ENCODE measurements at regions of chr6 and their contacts with region 1.

Region 1: GRCh38 chr6:165231581-165232561 is 77.5 kb downstream of the C6orf118 start:
- DNase-seq: peak; percentile 22 to 51
- ATAC-seq: peak; percentile 92 to 96
- H3K4me3 ChIP-seq: peak overlapping the region; percentile 2 to 37 (median 18)
- H3K27ac ChIP-seq: peak overlapping the region; percentile 79 to 86 (median 84)
- H3K4me1 ChIP-seq: peaks cover 13 to 18% of the 10 kb centered on the region in 2 donors
- H3K27me3 ChIP-seq: no peaks in the 10 kb centered on the region
- CTCF ChIP-seq: peak; percentile 57 to 76 (median 74)
- POLR2A ChIP-seq: no peak

Region 2: GRCh38 chr6:163637524-163637923 is 1594.3 kb before region 1 on chr6:
- in situ Hi-C with region 1: loop called in 1 of 4 experiments (anchors 25 kb)
- intact Hi-C with region 1: no loop called
- DNase-seq: no peak
- ATAC-seq: no peak
- H3K4me3 ChIP-seq: no peak overlapping the region
- H3K27ac ChIP-seq: no peak overlapping the region
- H3K4me1 ChIP-seq: no peaks in the 10 kb centered on the region
- H3K27me3 ChIP-seq: no peaks in the 10 kb centered on the region
- CTCF ChIP-seq: no peak
- POLR2A ChIP-seq: no peak

Region 3: GRCh38 chr6:164897523-164898235 is 334.2 kb before region 1 on chr6:
- in situ Hi-C with region 1: loop called in 1 of 4 experiments (anchors 25 kb)
- intact Hi-C with region 1: no loop called
- DNase-seq: no peak
- ATAC-seq: no peak
- H3K4me3 ChIP-seq: no peak overlapping the region
- H3K27ac ChIP-seq: no peak overlapping the region
- H3K4me1 ChIP-seq: no peaks in the 10 kb centered on the region
- H3K27me3 ChIP-seq: no peaks in the 10 kb centered on the region
- CTCF ChIP-seq: no peak
- POLR2A ChIP-seq: no peak

Region 4: GRCh38 chr6:164927288-164928056 is 304.4 kb before region 1 on chr6:
- in situ Hi-C with region 1: no loop called
- intact Hi-C with region 1: loop called (anchors 5 kb)
- DNase-seq: peak; percentile 37 to 61
- ATAC-seq: peak; percentile 88 to 97
- H3K4me3 ChIP-seq: peak overlapping the region; percentile 38 to 69 (median 51)
- H3K27ac ChIP-seq: peak overlapping the region in 3 of 4 donors; percentile 27 to 54 (median 47)
- H3K4me1 ChIP-seq: peaks cover 8 to 21% of the 10 kb centered on the region in 2 donors
- H3K27me3 ChIP-seq: no peaks in the 10 kb centered on the region
- CTCF ChIP-seq: peak; percentile 88 to 99 (median 93)
- POLR2A ChIP-seq: no peak

Region 5: GRCh38 chr6:165146456-165146855 is 85.4 kb before region 1 on chr6:
- in situ Hi-C with region 1: no loop called
- intact Hi-C with region 1: no loop called
- DNase-seq: no peak
- ATAC-seq: no peak
- H3K4me3 ChIP-seq: no peak overlapping the region
- H3K27ac ChIP-seq: no peak overlapping the region
- H3K4me1 ChIP-seq: no peaks in the 10 kb centered on the region
- H3K27me3 ChIP-seq: no peaks in the 10 kb centered on the region
- CTCF ChIP-seq: no peak
- POLR2A ChIP-seq: no peak